K562 (cell line): ENCODE measurements at regions of chr18 and their contacts with region 1.

Region 1: DNA sequence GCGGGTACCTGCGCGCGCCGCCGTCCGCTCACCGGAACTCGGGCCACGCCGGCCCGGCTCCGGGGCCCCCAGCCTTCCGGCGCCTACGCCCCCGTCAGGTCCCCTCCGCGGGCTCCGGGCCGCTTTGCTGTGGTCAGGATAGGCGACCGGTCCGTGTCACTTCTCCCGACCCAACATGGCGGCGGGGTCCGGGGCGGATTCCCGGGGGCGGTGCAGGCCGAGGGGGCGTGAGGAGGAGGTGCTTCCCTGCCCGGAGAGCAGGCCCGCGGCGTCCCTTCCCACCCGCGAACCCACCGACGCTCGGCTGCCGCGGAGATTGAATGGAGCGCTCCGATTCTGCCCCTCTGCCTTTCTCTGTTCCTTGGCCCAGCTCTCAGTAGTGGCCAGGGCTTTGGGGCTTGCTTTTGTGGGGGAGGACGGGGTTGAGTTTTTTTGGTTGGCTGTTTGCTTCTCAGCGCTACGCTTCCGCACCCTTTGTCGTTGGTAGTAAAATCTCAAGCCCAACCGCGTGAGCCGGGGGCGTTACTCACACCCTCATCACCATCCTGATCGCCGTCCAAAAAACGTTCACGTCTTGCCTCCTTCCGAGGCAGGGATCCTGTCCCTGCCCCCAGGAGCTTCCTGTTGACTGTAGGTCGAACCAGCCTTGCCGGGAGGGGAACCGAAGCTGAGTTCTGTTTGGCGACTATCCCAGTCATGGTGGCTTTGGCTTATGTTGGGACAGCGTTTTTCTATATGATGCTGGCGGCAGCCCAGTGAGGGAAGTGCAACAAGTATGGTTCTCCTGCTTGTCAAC is 532 bp upstream of the YES1 start:
- DNase-seq: peak; percentile 94 to 97 (median 96)
- ATAC-seq: peak; percentile 80
- H3K4me3 ChIP-seq: peak overlapping the region; percentile 90
- H3K27ac ChIP-seq: peak overlapping the region; percentile 97
- H3K4me1 ChIP-seq: peaks cover 32 to 41% of the 10 kb centered on the region in 2 experiments
- H3K27me3 ChIP-seq: no peaks in the 10 kb centered on the region
- CTCF ChIP-seq: no peak
- EP300 ChIP-seq: peak; percentile 55
- POLR2A ChIP-seq: peak; percentile 98
- RAD21 ChIP-seq: peak; percentile 14 to 27; a peak in 2 of 4 replicates

Region 2: GRCh38 chr18:741931-742512 is 70.6 kb before region 1 on chr18:
- CTCF ChIA-PET with region 1: interaction called, 3 read pairs
- POLR2A ChIA-PET with region 1: interaction called, 3 read pairs
- in situ Hi-C with region 1: no loop called
- intact Hi-C with region 1: loop called (anchors 1 kb)
- DNase-seq: peak; percentile 58 to 69 (median 66)
- ATAC-seq: peak; percentile 90
- H3K4me3 ChIP-seq: no peak overlapping the region
- H3K27ac ChIP-seq: no peak overlapping the region
- H3K4me1 ChIP-seq: no peaks in the 10 kb centered on the region
- H3K27me3 ChIP-seq: no peaks in the 10 kb centered on the region
- CTCF ChIP-seq: peak; percentile 69 to 92 (median 70); a peak in 5 of 6 replicates
- EP300 ChIP-seq: no peak
- POLR2A ChIP-seq: no peak
- RAD21 ChIP-seq: peak; percentile 96 to 97

Region 3: GRCh38 chr18:778194-778927 is 34.2 kb before region 1 on chr18:
- CTCF ChIA-PET with region 1: no interaction called
- POLR2A ChIA-PET with region 1: interaction called, 4 read pairs
- in situ Hi-C with region 1: no loop called
- intact Hi-C with region 1: loop called (anchors 2 kb)
- DNase-seq: peak in 1 of 4 experiments; percentile 40
- ATAC-seq: peak; percentile 14
- H3K4me3 ChIP-seq: no peak overlapping the region
- H3K27ac ChIP-seq: peak overlapping the region; percentile 54; the same call in 2 of the 3 replicates
- H3K4me1 ChIP-seq: peaks cover 33 to 76% of the 10 kb centered on the region in 2 experiments
- H3K27me3 ChIP-seq: no peaks in the 10 kb centered on the region
- CTCF ChIP-seq: no peak
- EP300 ChIP-seq: no peak
- POLR2A ChIP-seq: peak; percentile 52; the same call in 1 of the 2 replicates
- RAD21 ChIP-seq: no peak

Region 4: GRCh38 chr18:824179-824578 is 11.6 kb after region 1 on chr18:
- CTCF ChIA-PET with region 1: no interaction called
- POLR2A ChIA-PET with region 1: interaction called, 37 read pairs
- in situ Hi-C with region 1: no loop called
- intact Hi-C with region 1: no loop called
- DNase-seq: peak in 1 of 4 experiments; percentile 26
- ATAC-seq: peak; percentile 43; the same call in 2 of the 3 replicates
- H3K4me3 ChIP-seq: no peak overlapping the region
- H3K27ac ChIP-seq: no peak overlapping the region
- H3K4me1 ChIP-seq: peaks cover 6 to 10% of the 10 kb centered on the region in 2 experiments; a peak in 4 of 5 replicates
- H3K27me3 ChIP-seq: no peaks in the 10 kb centered on the region
- CTCF ChIP-seq: no peak
- EP300 ChIP-seq: no peak
- POLR2A ChIP-seq: no peak
- RAD21 ChIP-seq: no peak

Region 5: GRCh38 chr18:907115-907884 is 94.7 kb after region 1 on chr18:
- CTCF ChIA-PET with region 1: no interaction called
- POLR2A ChIA-PET with region 1: no interaction called
- in situ Hi-C with region 1: no loop called
- intact Hi-C with region 1: no loop called
- DNase-seq: no peak
- ATAC-seq: no peak
- H3K4me3 ChIP-seq: no peak overlapping the region
- H3K27ac ChIP-seq: no peak overlapping the region
- H3K4me1 ChIP-seq: peaks cover 0 to 44% of the 10 kb centered on the region in 2 experiments; a peak in 3 of 5 replicates
- H3K27me3 ChIP-seq: peaks cover 56 to 60% of the 10 kb centered on the region in 2 experiments; a peak in 4 of 5 replicates
- CTCF ChIP-seq: no peak
- EP300 ChIP-seq: no peak
- POLR2A ChIP-seq: no peak
- RAD21 ChIP-seq: no peak